WTC11 (cell line): ENCODE measurements at regions of chr2 and their contacts with region 1.

Region 1: GRCh38 chr2:189179570-189179950 is at the start of gene COL5A2:
- DNase-seq: no peak
- ATAC-seq: peak; percentile 82
- H3K4me3 Mint-ChIP-seq: peak within 1 kb of the TSS; percentile 79
- H3K27ac Mint-ChIP-seq: peak within 1 kb of the TSS; percentile 92
- H3K4me1 Mint-ChIP-seq: peaks cover 31% of the 10 kb centered on the region
- H3K27me3 Mint-ChIP-seq: no peaks in the 10 kb centered on the region
- CTCF ChIP-seq: no peak
- total RNA-seq, gene COL5A2: 16.0 to 18.4 TPM (median 17.2 TPM) in 3 replicates

Region 2: DNA sequence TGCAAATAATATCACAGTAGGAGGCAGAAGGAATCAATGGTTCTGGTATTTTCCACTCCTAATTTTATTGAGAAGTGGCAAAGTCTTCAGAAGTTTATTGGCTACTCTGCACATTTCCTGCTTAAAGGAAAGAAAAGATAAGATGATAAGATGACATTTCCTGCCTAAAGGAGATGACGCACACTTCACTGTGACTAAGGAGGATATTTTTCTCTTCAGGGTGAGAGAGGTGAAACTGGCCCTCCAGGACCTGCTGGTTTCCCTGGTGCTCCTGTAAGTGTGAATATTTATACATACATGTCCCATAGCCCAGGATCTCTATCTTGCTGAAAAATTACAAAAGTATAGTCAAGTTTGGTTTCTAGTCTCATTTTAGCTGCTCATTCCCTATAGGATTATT is 177.5 kb before region 1 on chr2:
- CTCF ChIA-PET with region 1: no interaction called
- POLR2A ChIA-PET with region 1: no interaction called
- DNase-seq: no peak
- ATAC-seq: no peak
- H3K4me3 Mint-ChIP-seq: no peak overlapping the region
- H3K27ac Mint-ChIP-seq: no peak overlapping the region
- H3K4me1 Mint-ChIP-seq: no peaks in the 10 kb centered on the region
- H3K27me3 Mint-ChIP-seq: no peaks in the 10 kb centered on the region
- CTCF ChIP-seq: no peak

Region 3: DNA sequence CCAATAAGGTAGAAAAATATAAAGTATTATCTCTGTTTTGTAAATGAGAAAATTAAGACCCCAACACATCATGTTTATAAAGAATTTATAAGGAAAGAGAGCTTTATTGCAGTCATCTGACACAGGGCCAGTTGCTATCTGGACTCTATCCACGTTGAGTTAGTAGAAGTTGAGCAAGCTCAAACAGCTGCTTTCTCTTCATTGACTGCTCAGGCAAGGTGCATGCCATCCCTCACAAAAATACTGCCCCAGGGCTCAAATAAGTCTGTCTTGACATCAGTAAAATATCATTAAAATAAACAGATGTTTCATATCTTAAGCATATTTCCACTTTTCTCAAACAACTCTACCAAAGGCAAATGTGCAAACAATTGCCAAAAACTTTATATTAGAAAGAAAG is 14.8 kb before region 1 on chr2:
- CTCF ChIA-PET with region 1: interaction called, 10 read pairs
- POLR2A ChIA-PET with region 1: no interaction called
- DNase-seq: no peak
- ATAC-seq: peak; percentile 27; the same call in 1 of the 2 replicates
- H3K4me3 Mint-ChIP-seq: no peak overlapping the region
- H3K27ac Mint-ChIP-seq: no peak overlapping the region
- H3K4me1 Mint-ChIP-seq: peaks cover 46% of the 10 kb centered on the region
- H3K27me3 Mint-ChIP-seq: no peaks in the 10 kb centered on the region
- CTCF ChIP-seq: no peak

Region 4: DNA sequence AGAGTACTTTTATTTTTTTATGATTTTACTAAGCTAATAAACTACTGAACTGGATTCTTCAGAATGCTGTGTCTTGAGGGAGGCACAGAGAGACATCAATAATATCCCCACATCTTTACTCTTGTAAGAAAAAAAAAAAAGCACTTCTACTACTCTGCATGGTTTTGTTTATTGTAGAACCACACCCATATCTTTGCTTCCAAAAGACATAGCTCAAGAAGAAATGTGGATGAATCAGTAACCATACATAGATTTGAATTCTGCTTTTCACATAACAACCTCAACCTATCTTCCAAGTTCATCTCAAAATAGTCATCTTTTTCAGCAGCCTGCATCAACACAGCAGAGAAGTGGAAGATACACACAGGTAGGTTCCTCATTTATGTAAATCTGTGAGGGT is 12.2 kb after region 1 on chr2:
- CTCF ChIA-PET with region 1: interaction called, 10 read pairs
- POLR2A ChIA-PET with region 1: no interaction called
- DNase-seq: no peak
- ATAC-seq: no peak
- H3K4me3 Mint-ChIP-seq: no peak overlapping the region
- H3K27ac Mint-ChIP-seq: no peak overlapping the region
- H3K4me1 Mint-ChIP-seq: peaks cover 4% of the 10 kb centered on the region
- H3K27me3 Mint-ChIP-seq: no peaks in the 10 kb centered on the region
- CTCF ChIP-seq: no peak